Sciatic nerve (tissue), 2 donors: ENCODE measurements at regions of chr20 and their contacts with region 1.

Region 1: DNA sequence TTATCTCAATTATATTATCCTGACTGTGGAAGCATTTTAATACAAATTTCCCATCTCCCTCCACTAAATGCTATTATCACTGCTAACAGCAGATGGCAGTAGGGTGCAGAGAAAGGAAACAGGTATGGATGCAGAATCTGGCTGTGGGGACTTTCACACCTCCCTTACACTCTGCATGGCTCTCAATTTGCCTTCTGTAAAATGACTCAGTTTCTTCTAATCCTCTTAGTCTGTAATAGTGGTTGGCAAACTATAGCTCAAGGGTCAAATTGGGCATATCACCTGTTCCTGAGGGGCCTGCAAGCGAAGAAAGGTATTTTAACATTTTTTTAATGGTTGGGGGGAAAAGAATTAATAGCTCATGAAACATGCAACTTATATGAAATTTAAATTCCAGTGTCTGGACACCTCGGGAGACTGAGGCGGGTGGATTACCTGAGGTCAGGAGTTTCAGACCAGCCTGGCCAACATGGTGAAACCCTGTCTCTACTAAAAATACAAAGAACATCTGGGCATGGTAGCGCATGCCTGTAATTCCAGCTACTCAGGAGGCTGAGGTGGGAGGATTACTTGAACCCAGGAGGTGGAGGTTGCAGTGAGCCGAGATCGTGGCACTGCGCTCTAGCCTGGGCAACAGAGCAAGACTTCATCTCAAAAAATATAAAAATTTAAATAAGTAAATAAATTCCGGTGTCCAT is 83.5 kb downstream of the ZMYND8 start:
- DNase-seq: peak; percentile 59
- ATAC-seq: peak; percentile 76

Region 2: GRCh38 chr20:46883892-46884291 is 389.1 kb before region 1 on chr20:
- intact Hi-C with region 1: no loop called
- DNase-seq: no peak
- ATAC-seq: peak; percentile 82

Region 3: GRCh38 chr20:47379433-47380150 is 106.5 kb after region 1 on chr20:
- intact Hi-C with region 1: loop called (anchors 5 kb)
- DNase-seq: no peak
- ATAC-seq: no peak

Region 4: GRCh38 chr20:49063279-49063678 is 1790.2 kb after region 1 on chr20:
- intact Hi-C with region 1: loop called (anchors 5 kb)
- DNase-seq: no peak
- ATAC-seq: no peak